ENCODE measurements at regions of chr10 and their contacts with region 1.

Region 1: GRCh38 chr10:7202858-7203257 is 208.0 kb downstream of the SFMBT2 start:
- DNase-seq: no peak
- H3K4me3 ChIP-seq: no peak overlapping the region
- H3K27ac ChIP-seq: no peak overlapping the region
- H3K27me3 ChIP-seq: no peaks in the 10 kb centered on the region
- CTCF ChIP-seq: no peak

Region 2: GRCh38 chr10:7111561-7111960 is 91.3 kb before region 1 on chr10:
- intact Hi-C with region 1: loop called in 1 of 2 experiments (anchors 5 kb)
- DNase-seq: no peak
- H3K4me3 ChIP-seq: no peak overlapping the region
- H3K27ac ChIP-seq: no peak overlapping the region
- H3K27me3 ChIP-seq: peaks cover 0 to 7% (median 0%) of the 10 kb centered on the region in 45 donors
- CTCF ChIP-seq: no peak